ENCODE measurements at regions of chr14 and their contacts with region 1.

Region 1: DNA sequence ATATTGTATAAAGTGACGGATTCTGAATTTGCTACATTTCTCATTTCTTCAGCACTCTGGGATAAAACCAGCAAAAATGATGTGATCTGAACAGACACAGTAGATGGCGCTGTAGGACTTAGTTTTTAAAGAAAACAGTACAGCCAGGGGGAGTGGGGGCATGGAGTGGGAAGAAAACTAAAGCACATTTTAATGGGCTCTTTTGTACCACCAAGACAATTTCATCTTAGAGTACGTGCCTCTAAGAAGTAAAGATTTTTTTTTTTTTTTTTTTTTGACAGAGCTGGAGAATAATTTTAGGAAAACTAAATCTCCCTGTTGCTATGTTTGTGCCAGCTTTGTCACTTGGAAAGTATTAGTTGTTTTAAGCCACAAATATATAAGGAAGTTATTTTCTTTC is 124.4 kb downstream of the RAD51B start:
- DNase-seq: peak; percentile 39
- CTCF ChIP-seq: peak; percentile 82

Region 2: DNA sequence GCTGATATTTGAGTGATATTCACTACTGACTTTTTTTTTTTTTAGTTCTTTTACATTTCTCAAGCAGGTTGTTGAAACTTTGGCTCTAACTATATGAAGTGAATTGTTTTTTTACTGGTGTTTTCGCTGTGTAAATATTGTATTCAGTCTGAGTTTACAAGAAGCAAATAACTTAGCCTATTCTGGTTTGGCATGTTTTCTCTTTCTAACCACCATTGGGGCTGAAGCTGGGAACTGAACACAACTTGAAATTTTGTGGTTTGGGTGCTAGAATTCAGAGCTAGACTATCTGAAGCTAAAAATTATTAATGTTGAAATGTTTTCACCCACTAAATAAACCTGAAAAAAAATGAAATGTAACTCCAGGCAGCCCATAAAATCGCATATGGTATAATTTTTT is 87.1 kb before region 1 on chr14:
- CTCF ChIA-PET with region 1: no interaction called
- POLR2A ChIA-PET with region 1: no interaction called
- DNase-seq: no peak
- CTCF ChIP-seq: no peak

Region 3: GRCh38 chr14:67957946-67958345 is 14.0 kb after region 1 on chr14:
- CTCF ChIA-PET with region 1: interaction called, 21 read pairs
- POLR2A ChIA-PET with region 1: no interaction called
- DNase-seq: no peak
- CTCF ChIP-seq: no peak

Region 4: DNA sequence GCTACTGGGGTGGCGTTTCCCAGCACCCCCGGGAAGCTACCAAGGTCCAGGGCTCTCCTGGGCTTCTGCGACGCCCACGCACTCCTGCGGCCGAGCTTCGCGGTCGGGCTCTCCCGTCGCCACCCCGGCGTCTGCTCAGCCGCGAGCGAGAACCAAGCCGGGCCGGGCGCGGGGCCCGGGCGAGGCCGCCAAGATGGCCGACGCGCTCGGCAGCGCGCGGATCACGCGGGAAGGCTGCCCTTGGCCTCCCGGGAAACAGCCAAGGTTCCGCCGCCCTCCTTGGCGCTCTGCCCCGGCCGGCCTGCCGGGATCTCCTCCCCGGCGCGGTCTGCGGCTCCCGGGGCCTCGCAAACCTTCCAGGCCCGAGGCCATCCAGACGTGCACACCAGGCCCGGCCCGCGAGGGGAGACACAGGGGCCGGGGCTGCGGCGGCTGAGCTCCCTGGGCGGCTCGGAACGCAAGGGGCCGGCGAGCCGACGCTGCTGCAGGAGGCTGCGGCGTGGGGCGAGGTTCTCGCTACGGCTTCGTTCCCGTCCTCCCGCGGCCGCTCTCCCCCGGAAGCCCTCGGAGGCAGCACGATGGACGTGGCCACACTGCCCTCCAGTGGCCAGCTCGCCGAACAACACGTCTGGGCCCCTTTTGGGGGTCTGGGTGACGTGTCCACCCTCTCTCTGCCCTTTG is 872.5 kb after region 1 on chr14:
- CTCF ChIA-PET with region 1: interaction called, 31 read pairs
- POLR2A ChIA-PET with region 1: no interaction called
- DNase-seq: peak; percentile 89
- CTCF ChIP-seq: peak; percentile 90

Region 5: GRCh38 chr14:68824517-68825347 is 880.8 kb after region 1 on chr14:
- CTCF ChIA-PET with region 1: interaction called, 17 read pairs
- POLR2A ChIA-PET with region 1: no interaction called
- DNase-seq: peak; percentile 58
- CTCF ChIP-seq: peak; percentile 91